HepG2 (cell line): ENCODE measurements at regions of chr1 and their contacts with region 1.

Region 1: GRCh38 chr1:227946624-227947385 is 927 bp downstream of the WNT9A start:
- DNase-seq: peak; percentile 36
- ATAC-seq: peak; percentile 89
- H3K4me3 ChIP-seq: peak overlapping the region; percentile 41 to 57 (median 47); a peak in 5 of 6 replicates
- H3K27ac ChIP-seq: no peak overlapping the region
- H3K4me1 ChIP-seq: peaks cover 16% of the 10 kb centered on the region
- H3K27me3 ChIP-seq: peaks cover 14 to 83% of the 10 kb centered on the region in 2 experiments; a peak in 4 of 5 replicates
- CTCF ChIP-seq: peak; percentile 82
- EP300 ChIP-seq: no peak
- POLR2A ChIP-seq: no peak
- RAD21 ChIP-seq: peak; percentile 93

Region 2: DNA sequence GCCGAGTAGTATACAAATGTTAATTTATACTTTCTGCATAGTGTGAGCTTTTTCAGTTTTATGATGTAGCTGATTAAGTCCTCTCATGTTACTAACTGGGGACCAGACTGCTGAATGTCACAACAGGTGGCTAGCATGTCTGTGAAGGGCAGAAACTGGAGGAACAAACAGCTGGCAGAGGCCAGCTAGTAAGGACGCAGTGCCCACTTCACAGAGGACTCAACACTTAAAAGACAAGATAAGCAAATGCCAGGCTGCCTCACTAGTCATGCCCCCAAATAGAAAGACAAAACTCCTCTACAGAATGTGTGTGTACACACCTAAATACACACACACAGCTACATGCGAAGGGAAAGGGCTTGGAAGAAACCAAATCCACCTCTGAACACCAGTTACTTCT is 457.2 kb before region 1 on chr1:
- CTCF ChIA-PET with region 1: no interaction called
- POLR2A ChIA-PET with region 1: no interaction called
- in situ Hi-C with region 1: loop called (anchors 10 kb)
- intact Hi-C with region 1: no loop called
- DNase-seq: no peak
- ATAC-seq: no peak
- H3K4me3 ChIP-seq: no peak overlapping the region
- H3K27ac ChIP-seq: no peak overlapping the region
- H3K4me1 ChIP-seq: no peaks in the 10 kb centered on the region
- H3K27me3 ChIP-seq: peaks cover 1 to 19% of the 10 kb centered on the region in 2 experiments; a peak in 3 of 5 replicates
- CTCF ChIP-seq: no peak
- EP300 ChIP-seq: no peak
- POLR2A ChIP-seq: no peak
- RAD21 ChIP-seq: no peak

Region 3: GRCh38 chr1:227712648-227713047 is 234.2 kb before region 1 on chr1:
- CTCF ChIA-PET with region 1: no interaction called
- POLR2A ChIA-PET with region 1: no interaction called
- in situ Hi-C with region 1: no loop called
- intact Hi-C with region 1: no loop called
- DNase-seq: no peak
- ATAC-seq: no peak
- H3K4me3 ChIP-seq: no peak overlapping the region
- H3K27ac ChIP-seq: no peak overlapping the region
- H3K4me1 ChIP-seq: no peaks in the 10 kb centered on the region
- H3K27me3 ChIP-seq: no peaks in the 10 kb centered on the region
- CTCF ChIP-seq: no peak
- EP300 ChIP-seq: no peak
- POLR2A ChIP-seq: no peak
- RAD21 ChIP-seq: no peak

Region 4: DNA sequence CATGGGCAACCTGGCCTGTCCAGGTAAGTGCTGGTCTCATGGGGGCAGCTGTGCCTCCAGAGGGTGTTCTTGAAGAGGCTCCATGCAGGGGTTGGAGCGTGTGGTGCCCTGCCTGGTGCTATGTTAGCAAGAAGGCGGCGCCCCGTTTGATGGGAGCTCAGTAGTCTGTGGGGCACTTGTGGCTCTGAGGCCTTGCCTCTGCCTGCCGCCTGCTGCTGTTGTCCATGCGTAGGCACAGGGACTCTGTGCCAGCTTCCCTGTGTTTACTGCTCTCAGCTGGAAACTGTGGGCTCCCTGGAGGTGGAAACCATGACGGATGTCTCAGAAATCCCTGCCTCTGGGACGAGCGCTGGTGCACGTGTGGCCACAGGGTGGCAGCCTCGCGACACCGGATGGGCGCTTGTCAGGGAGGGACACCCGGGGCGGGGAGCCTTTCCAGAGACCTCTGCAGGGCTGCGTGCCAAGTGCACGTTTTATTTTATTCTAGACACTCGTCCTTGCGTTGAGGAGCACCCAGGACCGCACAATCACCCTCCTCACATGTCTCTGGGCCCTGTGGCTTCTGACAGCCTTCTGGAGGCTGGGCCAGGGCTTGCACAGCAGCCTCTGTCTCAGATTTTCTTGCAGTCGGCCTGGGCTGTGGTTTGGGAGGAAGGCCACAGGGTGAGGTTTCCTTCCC is 184.4 kb before region 1 on chr1:
- CTCF ChIA-PET with region 1: interaction called, 36 read pairs
- POLR2A ChIA-PET with region 1: no interaction called
- in situ Hi-C with region 1: loop called (anchors 5 kb)
- intact Hi-C with region 1: loop called (anchors 1 kb)
- DNase-seq: peak; percentile 55
- ATAC-seq: peak; percentile 94
- H3K4me3 ChIP-seq: no peak overlapping the region
- H3K27ac ChIP-seq: no peak overlapping the region
- H3K4me1 ChIP-seq: no peaks in the 10 kb centered on the region
- H3K27me3 ChIP-seq: no peaks in the 10 kb centered on the region
- CTCF ChIP-seq: peak; percentile 96
- EP300 ChIP-seq: no peak
- POLR2A ChIP-seq: no peak
- RAD21 ChIP-seq: peak; percentile 92

Region 5: DNA sequence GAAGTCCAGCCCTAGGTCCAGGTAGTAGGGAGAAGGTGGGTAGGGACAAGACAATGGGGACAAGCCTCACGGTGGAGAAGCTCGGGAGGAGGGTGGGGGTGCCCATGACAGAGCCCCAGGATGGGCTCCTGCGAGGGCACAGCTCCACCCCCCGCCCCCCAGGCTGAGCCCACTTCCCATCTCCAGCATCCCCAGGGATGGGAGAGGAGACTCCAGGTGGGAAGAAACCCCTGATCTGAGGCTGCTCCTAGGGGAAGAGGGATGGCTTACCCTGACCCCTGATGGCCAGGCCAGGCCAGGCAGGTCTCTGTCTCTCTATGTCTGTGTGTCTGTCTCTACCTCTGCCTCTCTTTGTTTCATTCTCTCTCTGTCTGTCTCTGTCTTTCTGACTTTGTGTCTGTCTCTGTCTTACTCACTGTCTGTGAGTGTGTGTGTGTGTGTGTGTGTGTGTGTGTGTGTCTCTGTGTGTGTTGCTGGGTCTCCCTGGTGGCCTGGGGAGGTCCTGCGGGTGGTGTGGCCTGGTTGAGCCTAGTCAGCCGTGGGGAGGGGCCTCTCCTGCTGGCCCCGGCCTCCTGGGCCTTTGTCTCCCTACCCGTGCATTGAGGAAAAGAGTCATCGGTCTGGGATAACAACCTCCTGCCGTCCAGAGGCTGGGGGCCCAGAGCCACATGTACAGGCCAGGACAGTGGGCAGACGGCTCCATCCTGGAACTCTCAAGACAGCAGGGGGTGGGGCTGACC is 44.7 kb before region 1 on chr1:
- CTCF ChIA-PET with region 1: no interaction called
- POLR2A ChIA-PET with region 1: no interaction called
- in situ Hi-C with region 1: loop called (anchors 5 kb)
- intact Hi-C with region 1: no loop called
- DNase-seq: peak; percentile 16
- ATAC-seq: peak; percentile 31
- H3K4me3 ChIP-seq: no peak overlapping the region
- H3K27ac ChIP-seq: no peak overlapping the region
- H3K4me1 ChIP-seq: no peaks in the 10 kb centered on the region
- H3K27me3 ChIP-seq: peaks cover 0 to 4% of the 10 kb centered on the region in 2 experiments; a peak in 1 of 5 replicates
- CTCF ChIP-seq: no peak
- EP300 ChIP-seq: no peak
- POLR2A ChIP-seq: no peak
- RAD21 ChIP-seq: no peak